WTC11 (cell line): ENCODE measurements at regions of chr20 and their contacts with region 1.

Region 1: DNA sequence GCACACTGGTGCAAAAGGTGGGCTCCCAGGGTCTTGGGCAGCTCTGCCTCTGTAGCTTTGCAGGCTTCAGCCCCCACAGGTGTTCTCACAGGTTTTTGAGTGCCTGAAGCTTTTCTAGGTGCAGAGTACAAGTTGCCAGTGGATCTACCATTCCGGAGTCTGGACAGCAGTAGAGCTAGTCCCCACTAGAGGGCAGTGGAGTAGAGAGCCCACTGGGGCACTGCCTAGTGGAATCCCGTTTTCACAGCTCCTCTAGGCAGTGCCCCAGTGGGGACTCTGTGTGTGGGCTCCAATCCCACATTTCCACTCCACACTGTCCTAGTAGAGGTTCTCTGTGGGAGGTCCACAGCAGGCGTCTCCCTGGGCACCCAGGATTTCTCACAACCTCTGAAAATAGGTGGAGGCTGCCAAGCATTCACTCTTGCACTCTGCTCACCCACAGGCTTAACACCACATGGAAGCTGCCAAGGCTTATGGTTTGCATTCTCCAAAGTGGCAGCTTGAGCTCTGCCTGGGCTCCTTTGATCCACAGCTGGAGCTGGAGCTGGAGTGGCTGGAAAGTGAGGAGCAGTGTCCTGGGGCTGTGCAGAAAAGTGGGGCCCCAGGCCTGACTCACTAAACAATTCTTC is 86.3 kb upstream of the PROKR2 start:
- DNase-seq: peak; percentile 67
- ATAC-seq: peak; percentile 93
- H3K4me3 Mint-ChIP-seq: no peak overlapping the region
- H3K27ac Mint-ChIP-seq: no peak overlapping the region
- H3K4me1 Mint-ChIP-seq: no peaks in the 10 kb centered on the region
- H3K27me3 Mint-ChIP-seq: no peaks in the 10 kb centered on the region; the same call in 1 of the 2 replicates
- CTCF ChIP-seq: peak; percentile 62

Region 2: GRCh38 chr20:5316188-5317158 is 86.5 kb before region 1 on chr20 and contains the start of gene PROKR2:
- CTCF ChIA-PET with region 1: interaction called, 11 read pairs
- POLR2A ChIA-PET with region 1: no interaction called
- DNase-seq: peak; percentile 80
- ATAC-seq: peak; percentile 74
- H3K4me3 Mint-ChIP-seq: peak within 1 kb of the TSS; percentile 89
- H3K27ac Mint-ChIP-seq: no peak within 1 kb of the TSS
- H3K4me1 Mint-ChIP-seq: peaks cover 15% of the 10 kb centered on the region
- H3K27me3 Mint-ChIP-seq: peaks cover 59% of the 10 kb centered on the region
- CTCF ChIP-seq: no peak
- total RNA-seq, gene PROKR2: 1.5 to 2.6 TPM (median 2.0 TPM) in 3 replicates

Region 3: GRCh38 chr20:5416086-5416485 is 13.1 kb after region 1 on chr20:
- CTCF ChIA-PET with region 1: interaction called, 14 read pairs
- POLR2A ChIA-PET with region 1: no interaction called
- DNase-seq: no peak
- ATAC-seq: no peak
- H3K4me3 Mint-ChIP-seq: no peak overlapping the region
- H3K27ac Mint-ChIP-seq: no peak overlapping the region
- H3K4me1 Mint-ChIP-seq: peaks cover 10% of the 10 kb centered on the region; the same call in 1 of the 2 replicates
- H3K27me3 Mint-ChIP-seq: peaks cover 5% of the 10 kb centered on the region
- CTCF ChIP-seq: no peak

Region 4: GRCh38 chr20:5430670-5431069 is 27.7 kb after region 1 on chr20:
- CTCF ChIA-PET with region 1: interaction called, 33 read pairs
- POLR2A ChIA-PET with region 1: no interaction called
- DNase-seq: no peak
- ATAC-seq: peak; percentile 50
- H3K4me3 Mint-ChIP-seq: no peak overlapping the region
- H3K27ac Mint-ChIP-seq: no peak overlapping the region
- H3K4me1 Mint-ChIP-seq: no peaks in the 10 kb centered on the region
- H3K27me3 Mint-ChIP-seq: no peaks in the 10 kb centered on the region
- CTCF ChIP-seq: no peak

Region 5: GRCh38 chr20:5448449-5449118 is 45.6 kb after region 1 on chr20:
- CTCF ChIA-PET with region 1: interaction called, 74 read pairs
- POLR2A ChIA-PET with region 1: no interaction called
- DNase-seq: peak; percentile 82
- ATAC-seq: peak; percentile 91
- H3K4me3 Mint-ChIP-seq: no peak overlapping the region
- H3K27ac Mint-ChIP-seq: peak overlapping the region; percentile 35; the same call in 1 of the 2 replicates
- H3K4me1 Mint-ChIP-seq: peaks cover 20% of the 10 kb centered on the region
- H3K27me3 Mint-ChIP-seq: no peaks in the 10 kb centered on the region; the same call in 1 of the 2 replicates
- CTCF ChIP-seq: peak; percentile 68